ENCODE measurements at regions of chr1 and their contacts with region 1.

Region 1: GRCh38 chr1:151790071-151790940 is at the start of gene TDRKH:
- DNase-seq: peak; percentile 93 to 99 (median 98)
- H3K4me3 ChIP-seq: peak within 1 kb of the TSS; percentile 54 to 98 (median 87)
- H3K27ac ChIP-seq: peak within 1 kb of the TSS; percentile 16 to 93 (median 81)
- H3K27me3 ChIP-seq: no peaks in the 10 kb centered on the region
- CTCF ChIP-seq: peak in 48 of 56 donors; percentile 8 to 68 (median 46)
- total RNA-seq, gene TDRKH: 16.1 to 39.5 (median 28.5) TPM

Region 2: GRCh38 chr1:151705753-151706463 is 84.4 kb before region 1 on chr1:
- intact Hi-C with region 1: no loop called
- DNase-seq: no peak
- H3K4me3 ChIP-seq: no peak overlapping the region
- H3K27ac ChIP-seq: peak overlapping the region in 34 of 59 donors; percentile 8 to 95 (median 38)
- H3K27me3 ChIP-seq: no peaks in the 10 kb centered on the region
- CTCF ChIP-seq: no peak

Region 3: DNA sequence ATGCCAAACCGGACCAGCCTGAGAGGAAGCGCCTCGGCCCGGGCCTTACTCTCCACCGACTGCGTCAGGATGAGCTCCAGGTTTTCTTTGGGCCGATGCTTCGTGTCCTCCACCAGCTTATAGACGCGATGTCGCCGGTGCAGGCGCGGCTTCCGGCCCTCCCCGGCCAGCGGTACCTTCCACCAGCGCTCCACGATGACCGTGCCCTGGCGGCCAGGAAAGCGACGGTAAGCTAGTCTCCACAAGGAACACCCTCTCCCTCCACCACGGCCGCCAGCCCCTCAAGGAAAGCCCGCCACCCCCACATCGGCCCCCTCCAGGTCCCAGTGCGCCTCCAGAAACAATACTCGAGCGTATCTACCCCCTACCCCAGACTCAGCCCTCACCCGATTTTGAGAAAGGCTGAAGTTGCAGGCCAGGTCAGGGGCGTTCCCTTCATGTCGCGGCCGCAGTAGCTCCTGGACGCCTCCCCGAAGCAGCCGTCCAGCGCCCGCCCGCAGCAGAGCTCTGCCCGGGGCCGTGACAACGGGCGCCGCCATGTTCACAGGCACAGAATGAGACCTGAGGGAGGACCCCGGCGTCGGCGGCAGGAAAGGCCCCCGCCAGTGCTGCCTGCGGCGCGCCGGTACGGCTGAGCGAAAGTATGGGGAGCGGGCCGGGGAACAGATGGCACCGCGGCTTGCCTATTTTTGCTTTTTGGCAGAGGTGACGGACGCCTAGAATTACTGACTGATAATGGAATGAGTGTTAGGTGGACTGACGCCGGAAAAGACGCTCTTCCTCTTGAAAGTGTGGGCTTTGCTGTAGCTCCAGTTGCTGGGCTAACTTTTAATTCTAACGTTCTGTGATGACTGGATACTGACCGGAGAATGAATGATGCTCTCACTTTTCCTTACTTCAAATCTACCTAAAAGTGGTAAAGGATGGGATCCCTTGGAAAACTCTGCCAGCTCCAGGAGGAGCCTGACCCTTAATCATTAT is 27.1 kb before region 1 on chr1 and contains the start of gene MRPL9:
- intact Hi-C with region 1: loop called (anchors 1 to 2 kb)
- DNase-seq: peak; percentile 74 to 92 (median 84)
- H3K4me3 ChIP-seq: peak within 1 kb of the TSS; percentile 58 to 96 (median 82)
- H3K27ac ChIP-seq: peak within 1 kb of the TSS; percentile 4 to 97 (median 91)
- H3K27me3 ChIP-seq: no peaks in the 10 kb centered on the region
- CTCF ChIP-seq: peak in 26 of 56 donors; percentile 5 to 52 (median 16)
- total RNA-seq, gene MRPL9: 31.5 to 89.2 (median 54.5) TPM

Region 4: DNA sequence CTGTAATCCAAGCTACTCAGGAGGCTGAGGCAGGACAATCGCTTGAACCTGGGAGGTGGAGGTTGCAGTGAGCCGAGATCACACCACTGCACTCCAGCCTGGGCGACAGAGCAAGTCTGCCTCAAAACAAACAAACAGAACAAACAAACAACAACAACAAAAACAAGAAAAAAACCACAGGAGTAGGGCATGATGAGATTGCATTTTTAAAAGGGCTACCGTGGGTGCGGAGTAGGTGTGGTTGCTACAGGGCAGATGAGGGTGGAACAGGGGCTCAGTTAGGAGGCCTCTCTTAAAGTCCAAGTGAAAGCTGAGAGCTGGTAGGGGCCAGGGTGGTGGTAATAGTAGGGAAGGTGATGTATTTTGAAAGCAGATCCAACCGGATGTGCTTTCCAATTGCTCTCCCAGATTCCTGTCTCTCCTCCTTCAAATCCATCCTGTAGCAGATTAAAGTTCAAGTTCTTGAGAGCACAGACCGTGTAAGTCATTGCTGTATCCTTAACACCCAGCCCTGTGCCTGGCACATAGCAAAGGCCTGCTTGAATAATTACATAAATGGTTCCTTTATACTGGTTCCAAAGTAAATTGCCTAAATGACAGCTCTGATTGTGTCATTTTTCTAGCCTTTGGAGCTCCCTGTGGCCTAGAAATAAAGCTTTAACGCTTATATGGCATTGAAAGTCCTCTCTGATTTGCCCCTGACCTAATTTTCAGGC is 19.1 kb after region 1 on chr1:
- intact Hi-C with region 1: loop called in 1 of 2 experiments (anchors 2 kb)
- DNase-seq: peak in 2 of 10 donors; percentile 21 to 29
- H3K4me3 ChIP-seq: peak overlapping the region in 1 of 59 donors; percentile 3
- H3K27ac ChIP-seq: peak overlapping the region in 57 of 59 donors; percentile 18 to 89 (median 74)
- H3K27me3 ChIP-seq: no peaks in the 10 kb centered on the region
- CTCF ChIP-seq: no peak

Region 5: DNA sequence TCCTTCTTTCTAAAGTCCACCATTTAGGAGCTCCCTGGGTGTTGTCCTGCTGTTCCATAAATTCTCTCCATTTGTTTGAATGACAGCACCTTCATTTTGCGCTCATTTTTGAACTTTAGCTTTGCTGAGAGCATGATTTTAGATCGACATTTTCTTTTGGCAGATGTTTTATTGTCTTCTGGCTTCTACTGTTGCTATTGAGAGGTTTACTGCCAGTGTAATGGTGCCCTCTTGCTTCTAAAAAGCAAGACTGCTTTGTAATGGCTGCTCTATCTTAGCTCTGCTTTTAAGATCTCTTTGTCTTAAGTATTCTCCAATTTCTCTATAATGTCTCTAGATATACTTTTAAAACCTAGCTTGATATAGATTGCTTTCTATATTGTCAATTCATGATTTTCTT is 91.2 kb after region 1 on chr1:
- intact Hi-C with region 1: loop called in 1 of 2 experiments (anchors 2 kb)
- DNase-seq: no peak
- H3K4me3 ChIP-seq: no peak overlapping the region
- H3K27ac ChIP-seq: peak overlapping the region in 16 of 59 donors; percentile 2 to 63 (median 46)
- H3K27me3 ChIP-seq: no peaks in the 10 kb centered on the region
- CTCF ChIP-seq: peak in 55 of 56 donors; percentile 24 to 84 (median 63)

Measured in dorsolateral prefrontal cortex (tissue), 120 donors.